Calu3 (cell line): ENCODE measurements at regions of chr7 and their contacts with region 1.

Region 1: DNA sequence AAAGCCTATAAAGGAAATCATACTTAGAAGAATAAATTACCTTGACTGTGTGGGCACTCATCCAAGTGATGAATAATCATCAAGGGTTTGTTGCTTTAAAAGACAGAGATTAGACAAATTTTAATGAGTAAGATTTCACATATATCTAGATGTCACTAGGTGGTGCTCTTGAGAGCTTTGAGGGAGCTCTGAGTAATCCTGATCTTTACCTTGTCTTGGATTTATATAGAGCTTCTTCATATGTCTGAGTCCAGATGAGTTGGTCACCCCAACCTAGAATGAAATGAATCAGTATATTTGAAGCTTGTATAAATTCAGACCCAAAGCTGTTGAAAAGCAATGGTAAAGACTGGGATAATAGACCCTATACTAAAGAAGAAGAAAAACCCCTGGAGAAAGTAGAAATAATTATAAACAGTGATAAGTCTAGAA is 3.7 kb downstream of the AGR2 start:
- DNase-seq: no peak
- H3K4me3 Mint-ChIP-seq: peak overlapping the region; percentile 80
- H3K27ac Mint-ChIP-seq: peak overlapping the region; percentile 63
- H3K4me1 Mint-ChIP-seq: peaks cover 18% of the 10 kb centered on the region
- H3K27me3 Mint-ChIP-seq: no peaks in the 10 kb centered on the region
- CTCF ChIP-seq: peak; percentile 49

Region 2: GRCh38 chr7:16135658-16136057 is 665.5 kb before region 1 on chr7:
- CTCF ChIA-PET with region 1: no interaction called
- intact Hi-C with region 1: no loop called
- DNase-seq: no peak
- H3K4me3 Mint-ChIP-seq: no peak overlapping the region
- H3K27ac Mint-ChIP-seq: no peak overlapping the region
- H3K4me1 Mint-ChIP-seq: peaks cover 8% of the 10 kb centered on the region
- H3K27me3 Mint-ChIP-seq: no peaks in the 10 kb centered on the region
- CTCF ChIP-seq: no peak

Region 3: DNA sequence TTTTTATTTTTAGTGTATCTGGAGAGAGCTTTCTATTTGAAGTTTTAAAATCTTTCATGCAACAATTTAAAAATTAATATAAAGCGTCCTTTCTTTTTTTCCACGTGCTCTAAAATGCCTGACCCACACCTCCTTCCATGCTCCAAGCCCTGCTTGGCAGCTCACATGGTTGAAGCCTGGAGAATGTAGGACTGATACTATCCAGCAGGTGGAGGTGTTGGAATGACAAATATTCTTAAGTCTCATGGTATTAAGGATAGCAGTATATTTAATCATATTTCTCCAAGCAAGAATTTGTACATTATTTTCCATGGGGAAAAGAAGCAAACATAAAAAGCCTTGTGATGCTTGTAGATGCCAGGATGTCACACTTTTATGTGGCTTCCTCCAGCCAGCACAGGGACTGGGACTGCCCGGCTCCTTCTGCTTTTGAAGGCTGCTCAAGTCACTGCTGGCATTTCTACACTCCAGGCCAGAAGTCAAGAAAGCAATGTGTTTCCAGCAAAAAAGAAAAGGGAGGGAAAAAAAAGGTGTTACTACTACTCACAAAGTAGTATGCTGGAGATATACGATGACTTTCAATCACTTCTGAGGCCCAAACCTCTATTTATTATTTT is 105.4 kb before region 1 on chr7:
- CTCF ChIA-PET with region 1: interaction called, 7 read pairs
- intact Hi-C with region 1: loop called (anchors 1 kb)
- DNase-seq: peak; percentile 71
- H3K4me3 Mint-ChIP-seq: no peak overlapping the region
- H3K27ac Mint-ChIP-seq: no peak overlapping the region
- H3K4me1 Mint-ChIP-seq: peaks cover 7% of the 10 kb centered on the region
- H3K27me3 Mint-ChIP-seq: no peaks in the 10 kb centered on the region
- CTCF ChIP-seq: peak; percentile 83

Region 4: DNA sequence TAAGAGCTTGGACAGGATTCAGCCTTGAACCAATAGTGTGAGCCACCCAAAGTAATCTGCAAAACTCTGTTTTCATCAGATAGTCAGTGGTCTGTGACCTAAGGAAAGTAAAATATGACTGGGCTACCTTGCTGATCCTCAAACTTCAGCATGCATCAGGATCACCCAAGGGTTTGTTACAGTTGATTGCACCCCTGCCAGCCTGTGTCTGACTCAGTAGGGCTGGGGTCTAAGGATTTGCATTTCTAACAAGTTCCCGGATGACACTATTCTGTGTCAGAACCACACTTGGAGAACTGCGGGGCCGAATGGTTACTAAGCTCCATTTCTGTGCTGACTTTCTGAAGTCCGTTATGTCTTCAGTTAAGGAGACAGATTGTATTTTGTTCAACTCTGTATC is 88.2 kb before region 1 on chr7:
- CTCF ChIA-PET with region 1: no interaction called
- intact Hi-C with region 1: no loop called
- DNase-seq: no peak
- H3K4me3 Mint-ChIP-seq: no peak overlapping the region
- H3K27ac Mint-ChIP-seq: no peak overlapping the region
- H3K4me1 Mint-ChIP-seq: peaks cover 5% of the 10 kb centered on the region
- H3K27me3 Mint-ChIP-seq: no peaks in the 10 kb centered on the region
- CTCF ChIP-seq: no peak

Region 5: GRCh38 chr7:16774986-16775385 is 26.1 kb before region 1 on chr7:
- CTCF ChIA-PET with region 1: no interaction called
- intact Hi-C with region 1: no loop called
- DNase-seq: no peak
- H3K4me3 Mint-ChIP-seq: no peak overlapping the region
- H3K27ac Mint-ChIP-seq: no peak overlapping the region
- H3K4me1 Mint-ChIP-seq: peaks cover 16% of the 10 kb centered on the region
- H3K27me3 Mint-ChIP-seq: no peaks in the 10 kb centered on the region
- CTCF ChIP-seq: no peak

Region 6: DNA sequence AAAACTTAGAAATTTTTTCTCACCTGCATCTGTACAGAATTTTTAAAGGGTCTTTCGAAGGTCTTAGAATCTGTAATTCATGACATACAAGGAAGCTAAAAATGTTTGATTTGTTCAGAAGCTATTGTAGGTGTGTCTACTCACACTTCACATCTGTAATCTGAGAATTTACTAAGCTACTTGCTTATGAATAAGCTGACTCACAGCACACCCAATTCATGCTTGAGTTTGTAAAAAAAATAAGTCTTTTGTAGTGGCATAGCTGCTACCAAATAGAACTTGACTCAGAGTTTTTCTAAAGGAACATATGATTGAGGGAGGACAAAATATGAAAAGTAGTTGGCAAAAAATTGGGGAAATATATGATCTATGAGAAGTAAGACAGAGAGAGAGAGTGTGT is 16.4 kb after region 1 on chr7:
- CTCF ChIA-PET with region 1: interaction called, 18 read pairs
- intact Hi-C with region 1: no loop called
- DNase-seq: no peak
- H3K4me3 Mint-ChIP-seq: peak overlapping the region; percentile 0
- H3K27ac Mint-ChIP-seq: peak overlapping the region; percentile 53
- H3K4me1 Mint-ChIP-seq: peaks cover 75% of the 10 kb centered on the region
- H3K27me3 Mint-ChIP-seq: no peaks in the 10 kb centered on the region
- CTCF ChIP-seq: no peak

Region 7: GRCh38 chr7:16847366-16847864 is 46.3 kb after region 1 on chr7:
- CTCF ChIA-PET with region 1: interaction called, 18 read pairs
- intact Hi-C with region 1: loop called (anchors 2 kb)
- DNase-seq: peak; percentile 72
- H3K4me3 Mint-ChIP-seq: peak overlapping the region; percentile 26
- H3K27ac Mint-ChIP-seq: peak overlapping the region; percentile 68
- H3K4me1 Mint-ChIP-seq: peaks cover 37% of the 10 kb centered on the region
- H3K27me3 Mint-ChIP-seq: no peaks in the 10 kb centered on the region
- CTCF ChIP-seq: no peak

Region 8: DNA sequence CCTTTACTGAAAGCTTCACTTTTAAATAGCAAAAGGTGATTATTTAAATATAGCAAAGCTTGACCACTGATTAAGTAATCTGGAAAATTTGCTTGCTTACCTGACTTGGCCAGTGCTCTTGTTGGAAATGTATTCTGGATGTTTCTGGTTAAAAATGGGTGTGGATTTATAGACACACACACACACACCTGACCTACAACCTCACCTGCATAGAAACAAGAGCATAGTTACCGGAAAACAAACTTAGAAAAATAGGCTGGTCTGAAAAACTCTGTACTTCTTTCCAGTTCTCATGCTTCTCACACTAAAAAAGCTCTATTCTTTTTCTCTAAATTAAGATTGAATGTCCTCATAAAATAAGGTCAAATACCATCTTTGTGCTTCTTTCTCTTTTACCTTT is 80.7 kb after region 1 on chr7 and contains the start of gene AGR3:
- CTCF ChIA-PET with region 1: interaction called, 5 read pairs
- intact Hi-C with region 1: loop called (anchors 2 kb)
- DNase-seq: peak; percentile 51
- H3K4me3 Mint-ChIP-seq: no peak within 1 kb of the TSS
- H3K27ac Mint-ChIP-seq: peak within 1 kb of the TSS; percentile 60
- H3K4me1 Mint-ChIP-seq: peaks cover 14% of the 10 kb centered on the region
- H3K27me3 Mint-ChIP-seq: no peaks in the 10 kb centered on the region
- CTCF ChIP-seq: no peak
- total RNA-seq, gene AGR3: 8.4 and 11.0 TPM in 2 replicates

Region 9: GRCh38 chr7:16891338-16891737 is 90.2 kb after region 1 on chr7:
- CTCF ChIA-PET with region 1: interaction called, 12 read pairs
- intact Hi-C with region 1: loop called (anchors 1 kb)
- DNase-seq: peak; percentile 76
- H3K4me3 Mint-ChIP-seq: no peak overlapping the region
- H3K27ac Mint-ChIP-seq: no peak overlapping the region
- H3K4me1 Mint-ChIP-seq: peaks cover 48% of the 10 kb centered on the region
- H3K27me3 Mint-ChIP-seq: no peaks in the 10 kb centered on the region
- CTCF ChIP-seq: peak; percentile 68